Caco-2 (cell line): ENCODE measurements at regions of chr11 and their contacts with region 1.

Region 1: GRCh38 chr11:122733318-122733717 is 77.8 kb downstream of the UBASH3B start:
- DNase-seq: no peak
- H3K4me3 ChIP-seq: no peak overlapping the region
- H3K4me3 Mint-ChIP-seq: no peak overlapping the region
- H3K27ac Mint-ChIP-seq: peak overlapping the region; percentile 60
- H3K4me1 ChIP-seq: peaks cover 46% of the 10 kb centered on the region
- H3K4me1 Mint-ChIP-seq: peaks cover 36% of the 10 kb centered on the region
- H3K27me3 ChIP-seq: no peaks in the 10 kb centered on the region
- H3K27me3 Mint-ChIP-seq: no peaks in the 10 kb centered on the region
- CTCF ChIP-seq: no peak

Region 2: DNA sequence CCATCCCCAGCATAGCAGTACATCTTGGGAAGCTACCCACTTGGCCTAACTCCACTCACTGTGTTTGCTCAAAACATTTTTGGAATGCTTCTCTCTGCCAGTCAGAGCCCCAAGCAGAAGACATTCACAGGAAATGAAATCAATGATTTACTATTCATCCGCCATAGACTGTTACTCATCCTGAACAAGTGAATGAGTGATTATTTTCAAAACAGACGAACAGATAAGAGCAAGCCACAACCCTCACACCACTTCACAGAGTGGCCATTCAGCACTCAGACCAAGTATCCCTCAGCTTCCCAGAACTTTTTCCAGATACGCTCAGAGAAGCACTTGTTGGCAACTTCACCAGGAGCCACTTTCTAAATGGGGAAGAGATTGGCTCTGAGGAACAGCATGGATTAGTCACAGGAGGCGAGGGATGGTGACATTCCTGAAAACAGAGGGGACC is 90.8 kb before region 1 on chr11:
- CTCF ChIA-PET with region 1: no interaction called
- POLR2A ChIA-PET with region 1: no interaction called
- intact Hi-C with region 1: loop called (anchors 1 kb)
- DNase-seq: peak; percentile 66 to 69
- H3K4me3 ChIP-seq: no peak overlapping the region
- H3K4me3 Mint-ChIP-seq: peak overlapping the region; percentile 19
- H3K27ac Mint-ChIP-seq: peak overlapping the region; percentile 69
- H3K4me1 ChIP-seq: peaks cover 20% of the 10 kb centered on the region
- H3K4me1 Mint-ChIP-seq: peaks cover 12% of the 10 kb centered on the region
- H3K27me3 ChIP-seq: no peaks in the 10 kb centered on the region
- H3K27me3 Mint-ChIP-seq: no peaks in the 10 kb centered on the region
- CTCF ChIP-seq: no peak

Region 3: DNA sequence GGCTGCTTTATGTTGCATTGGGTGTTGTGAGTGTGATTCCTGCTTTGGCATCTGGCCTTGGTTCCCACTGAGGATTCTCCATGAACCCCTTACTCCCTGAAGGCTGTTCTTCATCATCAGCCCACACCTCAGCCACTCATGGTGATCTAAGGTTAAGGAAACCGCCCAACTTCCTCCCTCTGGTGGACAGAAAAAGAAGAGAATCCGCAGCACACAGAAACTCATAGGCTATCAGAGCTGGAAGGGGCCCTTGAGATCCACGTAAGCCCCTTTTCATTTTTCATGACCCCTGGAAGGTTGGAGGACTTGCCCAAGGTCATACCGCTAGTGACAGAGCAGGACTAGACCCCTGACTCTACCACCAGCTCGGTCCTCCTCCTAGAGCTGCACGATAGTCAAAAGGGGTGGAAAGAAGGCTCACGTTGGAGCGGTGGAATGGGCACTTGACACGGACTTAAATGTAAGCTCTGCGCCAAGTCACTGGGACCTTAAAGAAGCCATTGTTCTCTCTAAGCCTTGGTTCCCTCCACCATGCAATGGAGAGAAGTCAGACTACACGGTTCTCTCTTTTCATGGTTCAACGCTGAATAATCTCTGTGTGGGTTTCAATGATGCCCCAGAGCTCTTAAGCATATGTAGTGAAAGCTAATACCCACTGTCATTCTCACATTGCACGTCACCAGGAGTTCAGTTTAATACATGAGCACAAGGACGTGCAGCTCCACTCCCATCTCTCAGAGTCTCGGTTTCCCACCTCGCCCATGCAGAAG is 21.4 kb after region 1 on chr11:
- CTCF ChIA-PET with region 1: interaction called, 4 read pairs
- POLR2A ChIA-PET with region 1: interaction called, 13 read pairs
- intact Hi-C with region 1: no loop called
- DNase-seq: peak in 1 of 2 experiments; percentile 65
- H3K4me3 ChIP-seq: no peak overlapping the region
- H3K4me3 Mint-ChIP-seq: no peak overlapping the region
- H3K27ac Mint-ChIP-seq: no peak overlapping the region
- H3K4me1 ChIP-seq: no peaks in the 10 kb centered on the region
- H3K4me1 Mint-ChIP-seq: no peaks in the 10 kb centered on the region
- H3K27me3 ChIP-seq: no peaks in the 10 kb centered on the region
- H3K27me3 Mint-ChIP-seq: no peaks in the 10 kb centered on the region
- CTCF ChIP-seq: peak; percentile 72 to 86